ENCODE measurements at regions of chr6 and their contacts with region 1.

Region 1: DNA sequence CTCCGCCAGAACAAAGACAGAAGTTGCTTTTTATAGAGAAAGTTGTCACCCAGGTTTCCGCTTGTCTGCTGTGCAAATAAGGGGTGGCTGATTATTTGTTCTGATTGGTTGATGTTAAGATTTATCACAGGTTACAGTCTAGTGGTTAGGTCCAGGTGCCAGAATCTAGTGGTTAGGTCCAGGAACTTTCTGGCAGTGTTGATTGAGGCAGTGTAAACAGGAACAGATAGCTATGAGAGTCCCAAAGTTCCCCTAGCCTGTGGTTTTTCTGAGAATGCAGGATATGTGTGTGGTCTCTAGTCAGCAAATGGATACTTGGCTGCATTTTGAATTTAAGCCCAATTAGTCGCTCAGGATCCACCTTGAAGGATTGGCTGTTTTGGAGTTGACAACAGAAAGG is 148.0 kb downstream of the TMEM200A start:
- DNase-seq: peak; percentile 94
- H3K4me3 Mint-ChIP-seq: peak overlapping the region; percentile 70
- H3K27ac Mint-ChIP-seq: peak overlapping the region; percentile 95
- H3K4me1 Mint-ChIP-seq: peaks cover 51% of the 10 kb centered on the region
- H3K27me3 Mint-ChIP-seq: no peaks in the 10 kb centered on the region

Region 2: GRCh38 chr6:130132286-130132701 is 381.5 kb before region 1 on chr6:
- intact Hi-C with region 1: loop called (anchors 5 kb)
- DNase-seq: peak; percentile 92
- H3K4me3 Mint-ChIP-seq: peak overlapping the region; percentile 66
- H3K27ac Mint-ChIP-seq: peak overlapping the region; percentile 93
- H3K4me1 Mint-ChIP-seq: peaks cover 62% of the 10 kb centered on the region
- H3K27me3 Mint-ChIP-seq: no peaks in the 10 kb centered on the region

Region 3: DNA sequence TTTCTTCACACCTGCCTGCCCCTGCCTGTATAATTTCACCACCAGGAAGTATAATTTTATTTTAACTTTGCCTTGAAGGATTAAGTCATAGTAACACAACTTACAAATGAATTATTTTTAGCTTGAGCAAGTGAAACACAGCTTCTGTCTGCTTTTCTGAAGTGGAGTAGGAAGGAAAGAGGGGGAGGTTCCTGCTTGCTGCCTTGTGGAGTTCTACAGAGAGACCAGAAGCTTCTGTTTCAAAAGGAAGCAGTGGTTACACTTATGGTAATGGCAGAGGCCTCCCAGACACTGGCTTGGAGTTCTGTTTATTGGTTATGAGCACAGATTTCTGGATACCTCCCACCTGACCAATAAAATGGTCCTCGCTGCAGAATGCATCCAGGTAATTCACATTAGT is 11.6 kb after region 1 on chr6:
- intact Hi-C with region 1: loop called (anchors 1 kb)
- DNase-seq: peak; percentile 74
- H3K4me3 Mint-ChIP-seq: peak overlapping the region; percentile 13
- H3K27ac Mint-ChIP-seq: peak overlapping the region; percentile 73
- H3K4me1 Mint-ChIP-seq: peaks cover 31% of the 10 kb centered on the region
- H3K27me3 Mint-ChIP-seq: no peaks in the 10 kb centered on the region

Region 4: GRCh38 chr6:130575971-130576370 is 62.2 kb after region 1 on chr6:
- intact Hi-C with region 1: loop called (anchors 1 kb)
- DNase-seq: peak; percentile 93
- H3K4me3 Mint-ChIP-seq: peak overlapping the region; percentile 75
- H3K27ac Mint-ChIP-seq: peak overlapping the region; percentile 74
- H3K4me1 Mint-ChIP-seq: peaks cover 41% of the 10 kb centered on the region
- H3K27me3 Mint-ChIP-seq: no peaks in the 10 kb centered on the region

Region 5: GRCh38 chr6:130625825-130626527 is 112.2 kb after region 1 on chr6:
- intact Hi-C with region 1: loop called (anchors 1 kb)
- DNase-seq: no peak
- H3K4me3 Mint-ChIP-seq: peak overlapping the region; percentile 7
- H3K27ac Mint-ChIP-seq: peak overlapping the region; percentile 75
- H3K4me1 Mint-ChIP-seq: peaks cover 19% of the 10 kb centered on the region
- H3K27me3 Mint-ChIP-seq: no peaks in the 10 kb centered on the region

Measured in activated CD4-positive, alpha-beta T cell treated with anti-CD3 and anti-CD28 coated beads, Interleukin-2, amount 10 ng/mL, durations not matched to agents 24 days and 14 days (primary cell).